SK-N-SH (cell line): ENCODE measurements at regions of chr17 and their contacts with region 1.

Region 1: DNA sequence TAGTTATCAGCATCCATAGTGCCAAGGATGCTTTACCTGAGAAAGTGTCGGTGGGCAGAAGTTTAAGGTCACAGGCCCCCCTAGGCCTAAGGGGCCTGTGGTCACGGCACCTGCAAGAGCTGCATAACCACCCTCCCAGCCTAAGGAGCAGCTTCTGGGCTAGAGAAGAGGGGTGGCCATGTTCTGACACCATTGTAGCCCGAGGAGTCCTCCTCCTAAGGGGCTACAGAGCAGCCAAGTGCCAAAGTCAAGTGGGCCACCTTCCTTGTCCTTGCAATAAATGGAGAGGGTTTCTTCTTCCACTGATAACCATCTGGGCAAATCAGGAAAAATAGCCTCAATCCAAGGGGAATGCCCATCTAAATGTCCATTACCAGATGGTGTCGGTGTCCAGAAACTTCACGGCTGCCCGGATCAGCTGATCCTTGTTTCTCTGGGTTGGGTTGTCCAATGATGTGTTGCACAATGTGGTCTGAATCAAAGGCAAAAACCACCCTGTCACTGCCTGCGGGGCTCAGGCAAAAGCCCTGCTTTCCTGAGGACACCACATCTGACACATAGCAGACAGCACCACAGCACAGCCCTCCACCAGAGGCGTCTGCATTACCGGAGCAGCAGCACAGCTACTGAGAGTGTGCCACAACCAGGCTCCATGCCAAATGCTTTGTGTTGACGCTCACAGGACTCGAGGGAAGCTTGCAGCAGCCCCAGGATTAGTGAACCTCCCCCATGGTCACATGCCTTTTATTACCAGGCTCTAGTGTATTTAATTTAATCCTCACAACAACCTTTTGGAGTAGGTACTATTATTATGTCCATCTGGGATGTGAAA is 12.8 kb downstream of the ATPAF2 start:
- DNase-seq: peak; percentile 68
- H3K4me3 ChIP-seq: no peak overlapping the region
- H3K27ac ChIP-seq: peak overlapping the region in 1 of 2 experiments; percentile 88; a peak in 2 of 4 replicates
- H3K4me1 ChIP-seq: peaks cover 9 to 41% of the 10 kb centered on the region in 2 experiments; a peak in 3 of 4 replicates
- H3K27me3 ChIP-seq: no peaks in the 10 kb centered on the region
- CTCF ChIP-seq: no peak
- EP300 ChIP-seq: peak in 1 of 2 experiments; percentile 69; a peak in 2 of 4 replicates
- RAD21 ChIP-seq: peak; percentile 27; the same call in 1 of the 2 replicates

Region 2: GRCh38 chr17:17985555-17985954 is 40.6 kb before region 1 on chr17:
- CTCF ChIA-PET with region 1: interaction called, 20 read pairs
- POLR2A ChIA-PET with region 1: no interaction called
- DNase-seq: peak; percentile 54
- H3K4me3 ChIP-seq: no peak overlapping the region
- H3K27ac ChIP-seq: no peak overlapping the region
- H3K4me1 ChIP-seq: peaks cover 2 to 4% of the 10 kb centered on the region in 2 experiments; a peak in 2 of 4 replicates
- H3K27me3 ChIP-seq: no peaks in the 10 kb centered on the region
- CTCF ChIP-seq: peak; percentile 46
- EP300 ChIP-seq: no peak
- RAD21 ChIP-seq: peak; percentile 65

Region 3: GRCh38 chr17:18176176-18176575 is 150.0 kb after region 1 on chr17:
- CTCF ChIA-PET with region 1: no interaction called
- POLR2A ChIA-PET with region 1: no interaction called
- DNase-seq: no peak
- H3K4me3 ChIP-seq: no peak overlapping the region
- H3K27ac ChIP-seq: no peak overlapping the region
- H3K4me1 ChIP-seq: no peaks in the 10 kb centered on the region
- H3K27me3 ChIP-seq: no peaks in the 10 kb centered on the region
- CTCF ChIP-seq: no peak
- EP300 ChIP-seq: no peak
- RAD21 ChIP-seq: no peak